ENCODE measurements at regions of chr2 and their contacts with region 1.

Region 1: DNA sequence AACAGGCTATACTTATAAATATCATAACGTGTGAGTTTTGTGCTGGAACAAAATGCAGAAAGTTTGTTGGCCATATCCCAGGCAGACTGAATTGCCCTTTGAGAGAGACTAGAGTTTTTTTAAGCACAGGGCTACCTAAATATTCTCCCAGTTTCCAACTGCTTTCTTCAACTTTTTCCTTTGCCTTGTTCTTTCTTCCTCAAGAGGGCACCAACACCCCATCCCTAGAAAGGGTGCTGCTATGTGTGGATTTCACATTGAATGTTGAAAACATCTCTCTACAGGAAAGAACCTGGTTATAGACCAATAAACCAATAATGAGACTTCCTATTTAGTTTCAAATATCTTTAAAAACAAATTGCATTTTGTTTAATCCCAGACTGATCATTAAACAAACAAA is 87.9 kb downstream of the ICOS start:
- DNase-seq: peak; percentile 81
- H3K4me3 ChIP-seq: no peak overlapping the region
- H3K27ac ChIP-seq: no peak overlapping the region
- H3K4me1 ChIP-seq: peaks cover 13% of the 10 kb centered on the region
- H3K27me3 ChIP-seq: no peaks in the 10 kb centered on the region
- CTCF ChIP-seq: peak; percentile 54 to 59
- POLR2A ChIP-seq: no peak

Region 2: DNA sequence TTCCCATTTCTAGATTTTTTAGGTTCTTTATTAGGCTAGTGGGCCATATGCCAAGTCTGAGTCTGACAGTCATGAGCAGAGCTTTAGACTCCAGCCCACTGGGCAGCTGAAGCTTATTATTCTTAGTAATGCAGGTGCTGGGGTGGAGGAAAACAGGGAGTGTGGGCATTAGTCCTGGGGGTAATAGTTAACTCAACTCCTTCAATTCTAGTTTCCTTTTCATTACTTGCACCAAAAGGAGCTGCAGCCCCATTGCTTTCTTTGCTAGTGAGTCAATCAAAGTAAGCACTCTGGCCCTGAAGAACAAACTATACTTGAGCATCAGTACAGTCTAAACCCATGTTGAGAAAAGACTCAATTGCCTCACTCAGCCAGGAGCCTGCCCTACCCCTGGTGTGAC is 52.4 kb before region 1 on chr2:
- CTCF ChIA-PET with region 1: no interaction called
- POLR2A ChIA-PET with region 1: no interaction called
- dilution Hi-C with region 1: no loop called
- intact Hi-C with region 1: no loop called
- DNase-seq: no peak
- H3K4me3 ChIP-seq: no peak overlapping the region
- H3K27ac ChIP-seq: no peak overlapping the region
- H3K4me1 ChIP-seq: no peaks in the 10 kb centered on the region
- H3K27me3 ChIP-seq: peaks cover 7 to 9% of the 10 kb centered on the region in 2 experiments
- CTCF ChIP-seq: no peak
- POLR2A ChIP-seq: no peak

Region 3: GRCh38 chr2:204051476-204051875 is 27.0 kb after region 1 on chr2:
- CTCF ChIA-PET with region 1: interaction called, 14 read pairs
- POLR2A ChIA-PET with region 1: no interaction called
- dilution Hi-C with region 1: no loop called
- intact Hi-C with region 1: no loop called
- DNase-seq: peak; percentile 14
- H3K4me3 ChIP-seq: no peak overlapping the region
- H3K27ac ChIP-seq: no peak overlapping the region
- H3K4me1 ChIP-seq: no peaks in the 10 kb centered on the region
- H3K27me3 ChIP-seq: peaks cover 15 to 28% of the 10 kb centered on the region in 2 experiments
- CTCF ChIP-seq: peak; percentile 21 to 31
- POLR2A ChIP-seq: no peak

Region 4: GRCh38 chr2:204145263-204145751 is 120.8 kb after region 1 on chr2:
- CTCF ChIA-PET with region 1: interaction called, 21 read pairs
- POLR2A ChIA-PET with region 1: no interaction called
- dilution Hi-C with region 1: no loop called
- intact Hi-C with region 1: loop called (anchors 1 kb)
- DNase-seq: peak; percentile 78
- H3K4me3 ChIP-seq: peak overlapping the region in 2 of 3 experiments; percentile 20 to 46
- H3K27ac ChIP-seq: no peak overlapping the region
- H3K4me1 ChIP-seq: peaks cover 4% of the 10 kb centered on the region
- H3K27me3 ChIP-seq: peaks cover 0 to 6% of the 10 kb centered on the region in 2 experiments
- CTCF ChIP-seq: peak; percentile 89 to 91
- POLR2A ChIP-seq: no peak

Region 5: GRCh38 chr2:204260162-204260877 is 235.8 kb after region 1 on chr2:
- CTCF ChIA-PET with region 1: interaction called, 11 read pairs
- POLR2A ChIA-PET with region 1: no interaction called
- dilution Hi-C with region 1: no loop called
- intact Hi-C with region 1: loop called (anchors 1 kb)
- DNase-seq: peak; percentile 86
- H3K4me3 ChIP-seq: no peak overlapping the region
- H3K27ac ChIP-seq: no peak overlapping the region
- H3K4me1 ChIP-seq: peaks cover 6% of the 10 kb centered on the region
- H3K27me3 ChIP-seq: peaks cover 0 to 2% of the 10 kb centered on the region in 2 experiments
- CTCF ChIP-seq: peak; percentile 63 to 72
- POLR2A ChIP-seq: no peak

Region 6: DNA sequence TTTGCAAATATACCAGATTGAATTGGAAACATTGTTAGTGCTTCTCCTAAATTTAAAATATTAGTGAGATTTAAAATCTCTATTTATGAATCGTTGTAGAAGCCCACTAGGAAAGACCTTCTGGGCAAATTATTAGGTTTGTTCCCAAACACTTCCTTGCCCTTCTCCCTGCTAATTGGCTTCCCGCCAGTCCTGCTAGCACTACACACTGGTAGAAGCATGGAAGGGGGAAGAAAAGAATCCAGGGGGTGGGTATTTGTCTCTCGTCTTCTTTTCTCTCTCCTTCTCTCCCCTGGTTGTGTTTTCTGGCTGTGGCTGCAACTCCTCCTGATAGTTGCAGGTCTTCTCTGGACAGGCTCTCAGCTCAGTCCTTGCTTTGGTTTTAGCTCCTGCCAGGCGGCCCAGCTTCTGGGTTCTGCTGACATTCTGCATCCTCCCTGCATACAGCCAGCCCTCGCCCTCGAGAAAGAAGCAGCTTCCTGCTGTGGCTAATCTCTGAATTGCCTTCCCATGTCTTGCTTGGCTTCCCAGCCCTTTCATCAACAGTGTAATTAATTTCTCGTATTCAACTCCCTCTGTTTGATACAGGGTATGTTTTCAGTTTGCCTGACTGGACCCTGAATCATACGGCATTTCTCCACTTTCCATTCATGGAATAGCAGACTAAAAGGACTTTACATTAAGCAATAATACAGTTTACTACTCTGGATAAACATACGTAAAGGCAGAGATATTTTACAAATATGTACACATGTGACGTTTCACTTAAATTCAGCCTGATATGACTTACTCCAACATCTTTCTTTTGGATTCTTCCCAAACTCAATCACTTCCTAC is 513.9 kb after region 1 on chr2:
- CTCF ChIA-PET with region 1: no interaction called
- POLR2A ChIA-PET with region 1: no interaction called
- dilution Hi-C with region 1: no loop called
- intact Hi-C with region 1: loop called (anchors 5 kb)
- DNase-seq: peak; percentile 93
- H3K4me3 ChIP-seq: peak overlapping the region in 2 of 3 experiments; percentile 6 to 51
- H3K27ac ChIP-seq: peak overlapping the region; percentile 81
- H3K4me1 ChIP-seq: peaks cover 32% of the 10 kb centered on the region
- H3K27me3 ChIP-seq: no peaks in the 10 kb centered on the region
- CTCF ChIP-seq: no peak
- POLR2A ChIP-seq: no peak

Region 7: DNA sequence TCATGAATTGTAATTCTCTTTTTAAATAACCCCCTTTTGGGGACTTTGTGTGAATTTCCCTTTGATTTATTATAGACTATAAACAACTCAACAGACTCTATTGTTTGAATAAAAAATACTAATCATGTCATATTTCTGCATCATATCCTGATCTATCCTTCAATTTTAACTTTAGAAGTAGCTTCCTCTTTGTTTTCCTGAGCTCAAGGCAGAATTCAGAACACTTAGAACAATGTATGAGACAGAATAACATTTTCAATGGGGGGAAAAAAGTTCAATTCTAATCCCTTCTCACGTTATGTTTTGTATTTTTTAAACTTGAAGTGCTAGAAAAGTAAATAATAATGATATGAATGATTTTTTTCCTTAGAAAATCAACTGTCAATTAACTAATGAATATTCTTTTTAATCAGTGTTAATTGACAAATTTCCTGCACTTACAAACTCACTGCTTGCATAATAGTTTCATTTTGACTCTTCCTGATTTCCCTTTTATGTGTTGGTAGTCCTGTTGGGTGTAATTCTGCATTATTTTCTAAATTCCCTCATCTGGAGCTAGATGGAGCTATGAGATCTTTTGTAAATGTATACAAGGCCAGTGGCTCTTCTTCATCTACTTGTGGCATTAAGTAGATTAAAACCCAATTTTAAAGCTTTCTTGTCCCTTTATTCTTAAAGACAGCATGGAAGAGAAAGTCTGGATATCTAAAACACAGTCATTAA is 846.9 kb after region 1 on chr2:
- CTCF ChIA-PET with region 1: no interaction called
- POLR2A ChIA-PET with region 1: no interaction called
- dilution Hi-C with region 1: no loop called
- intact Hi-C with region 1: loop called (anchors 10 kb)
- DNase-seq: peak; percentile 87
- H3K4me3 ChIP-seq: no peak overlapping the region
- H3K27ac ChIP-seq: peak overlapping the region; percentile 42
- H3K4me1 ChIP-seq: peaks cover 14% of the 10 kb centered on the region
- H3K27me3 ChIP-seq: no peaks in the 10 kb centered on the region
- CTCF ChIP-seq: peak in 1 of 2 donors; percentile 20
- POLR2A ChIP-seq: no peak

Region 8: DNA sequence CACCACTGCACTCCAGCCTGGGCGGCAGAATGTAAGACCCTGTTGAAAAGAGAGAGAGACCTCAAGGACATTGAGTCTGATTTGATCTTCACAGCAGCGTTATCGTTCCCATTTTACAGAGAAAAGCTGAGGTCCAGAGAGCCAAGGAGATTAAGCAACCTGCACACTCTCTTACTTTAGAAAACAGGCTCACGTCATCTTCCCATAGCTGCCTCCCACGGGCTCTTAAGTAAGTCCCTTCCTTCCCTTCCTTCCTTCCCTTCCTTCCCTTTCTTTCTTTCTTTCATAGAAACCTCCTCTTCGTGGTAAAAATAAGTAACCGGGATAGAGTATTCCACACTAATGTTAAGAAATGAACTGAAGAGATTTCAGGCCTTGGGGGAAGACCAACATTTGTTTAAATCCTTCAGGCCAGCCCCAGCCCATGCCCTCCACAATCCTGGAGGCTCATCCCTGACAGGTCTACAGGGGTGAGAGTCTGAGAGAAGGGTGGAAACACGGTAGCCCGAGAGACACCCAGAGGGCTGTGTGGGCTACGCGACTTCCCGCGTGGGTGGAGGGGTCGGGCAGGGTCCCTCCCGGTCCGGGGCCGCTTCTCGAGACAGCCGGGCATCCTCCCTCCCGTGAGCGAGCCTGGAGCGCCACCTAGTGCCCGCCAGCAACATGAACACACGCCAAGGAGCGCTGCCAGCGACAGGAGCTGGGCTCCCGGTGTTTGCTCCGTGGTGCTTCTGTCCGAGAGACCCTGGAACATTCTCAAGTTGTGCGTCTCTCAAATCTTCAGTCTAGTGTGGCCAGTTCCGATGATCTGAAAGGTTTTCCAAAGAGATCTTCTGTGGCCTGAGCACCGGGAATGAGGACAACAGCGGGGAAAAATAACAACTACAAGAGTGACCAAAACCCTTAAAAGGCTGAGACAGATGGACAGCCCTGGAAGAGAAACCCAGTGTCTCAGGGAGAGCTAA is 1901.2 kb after region 1 on chr2:
- CTCF ChIA-PET with region 1: interaction called, 16 read pairs
- POLR2A ChIA-PET with region 1: no interaction called
- dilution Hi-C with region 1: no loop called
- intact Hi-C with region 1: loop called (anchors 5 kb)
- DNase-seq: peak; percentile 79
- H3K4me3 ChIP-seq: peak overlapping the region in 1 of 3 experiments; percentile 47
- H3K27ac ChIP-seq: no peak overlapping the region
- H3K4me1 ChIP-seq: peaks cover 17% of the 10 kb centered on the region
- H3K27me3 ChIP-seq: peaks cover 5 to 6% of the 10 kb centered on the region in 2 experiments
- CTCF ChIP-seq: peak; percentile 92 to 96
- POLR2A ChIP-seq: no peak